ENCODE measurements at regions of chr7 and their contacts with region 1.

Region 1: DNA sequence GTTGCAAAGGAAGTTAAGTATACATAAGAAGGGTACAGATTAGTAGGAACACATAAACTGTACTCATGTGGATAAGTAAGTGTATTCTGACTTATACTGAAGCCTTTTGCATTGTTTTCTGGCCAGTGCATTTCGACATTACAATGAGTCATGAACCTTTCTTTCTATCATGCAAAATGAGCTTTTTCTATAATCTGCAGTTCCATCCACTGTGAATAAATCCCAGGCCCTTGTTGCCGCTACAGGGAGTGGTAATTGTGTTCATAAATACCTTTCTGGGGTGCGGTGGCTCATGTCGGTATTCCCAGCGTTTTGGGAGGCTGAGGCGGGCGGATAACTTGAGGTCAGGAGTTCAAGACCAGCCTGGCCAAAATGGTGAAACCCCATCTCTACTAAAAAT is 858.3 kb downstream of the GRM8 start:
- DNase-seq: no peak
- H3K4me3 ChIP-seq: no peak overlapping the region
- H3K27ac ChIP-seq: no peak overlapping the region
- H3K4me1 ChIP-seq: no peaks in the 10 kb centered on the region
- CTCF ChIP-seq: no peak

Region 2: DNA sequence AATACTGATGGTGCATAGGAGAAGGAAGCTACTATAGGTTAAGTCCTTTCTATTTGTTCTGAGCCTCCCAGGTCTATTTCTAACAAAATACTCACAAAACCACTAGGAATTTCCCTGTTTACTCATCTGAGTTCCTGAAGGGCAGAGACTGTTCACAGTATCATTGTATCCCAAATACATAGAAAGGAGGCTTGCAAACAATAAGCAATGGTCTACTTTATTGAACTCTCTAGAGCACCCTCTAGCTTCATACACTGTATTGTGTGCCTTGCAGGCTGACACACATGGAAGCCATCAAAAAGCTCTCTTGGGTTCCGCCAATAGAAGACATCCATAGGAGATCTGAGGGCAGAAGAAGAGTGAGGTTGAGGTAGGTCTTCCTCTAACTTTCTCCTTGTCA is 32.2 kb after region 1 on chr7:
- CTCF ChIA-PET with region 1: no interaction called
- POLR2A ChIA-PET with region 1: no interaction called
- intact Hi-C with region 1: loop called (anchors 5 kb)
- DNase-seq: no peak
- H3K4me3 ChIP-seq: no peak overlapping the region
- H3K27ac ChIP-seq: no peak overlapping the region
- H3K4me1 ChIP-seq: no peaks in the 10 kb centered on the region
- CTCF ChIP-seq: 0 out of 2 replicates have a peak, but pooled peaks have one; percentile 13

Region 3: GRCh38 chr7:126750207-126750911 is 356.0 kb after region 1 on chr7:
- CTCF ChIA-PET with region 1: no interaction called
- POLR2A ChIA-PET with region 1: no interaction called
- intact Hi-C with region 1: no loop called
- DNase-seq: no peak
- H3K4me3 ChIP-seq: no peak overlapping the region
- H3K27ac ChIP-seq: no peak overlapping the region
- H3K4me1 ChIP-seq: no peaks in the 10 kb centered on the region
- CTCF ChIP-seq: no peak